GM12878 (cell line): ENCODE measurements at regions of chr4 and their contacts with region 1.

Region 1: GRCh38 chr4:100093091-100093866 is 97.0 kb downstream of the DDIT4L start:
- DNase-seq: peak; percentile 43
- ATAC-seq: peak; percentile 95
- H3K4me3 ChIP-seq: no peak overlapping the region
- H3K27ac ChIP-seq: no peak overlapping the region
- H3K4me1 ChIP-seq: no peaks in the 10 kb centered on the region
- H3K27me3 ChIP-seq: no peaks in the 10 kb centered on the region
- CTCF ChIP-seq: peak; percentile 78 to 87 (median 81)
- EP300 ChIP-seq: peak in 1 of 2 experiments; percentile 20; a peak in 2 of 4 replicates
- POLR2A ChIP-seq: no peak
- RAD21 ChIP-seq: peak; percentile 78

Region 2: GRCh38 chr4:99986792-99987191 is 106.5 kb before region 1 on chr4:
- CTCF ChIA-PET with region 1: interaction called, 11 read pairs
- POLR2A ChIA-PET with region 1: no interaction called
- RAD21 ChIA-PET with region 1: no interaction called
- SMC1A ChIA-PET with region 1: interaction called, 4 read pairs
- in situ Hi-C with region 1: no loop called
- intact Hi-C with region 1: no loop called
- DNase-seq: peak; percentile 3
- ATAC-seq: peak; percentile 87
- H3K4me3 ChIP-seq: no peak overlapping the region
- H3K27ac ChIP-seq: no peak overlapping the region
- H3K4me1 ChIP-seq: peaks cover 7% of the 10 kb centered on the region; the same call in 1 of the 2 replicates
- H3K27me3 ChIP-seq: no peaks in the 10 kb centered on the region
- CTCF ChIP-seq: no peak
- EP300 ChIP-seq: no peak
- POLR2A ChIP-seq: no peak
- RAD21 ChIP-seq: no peak

Region 3: DNA sequence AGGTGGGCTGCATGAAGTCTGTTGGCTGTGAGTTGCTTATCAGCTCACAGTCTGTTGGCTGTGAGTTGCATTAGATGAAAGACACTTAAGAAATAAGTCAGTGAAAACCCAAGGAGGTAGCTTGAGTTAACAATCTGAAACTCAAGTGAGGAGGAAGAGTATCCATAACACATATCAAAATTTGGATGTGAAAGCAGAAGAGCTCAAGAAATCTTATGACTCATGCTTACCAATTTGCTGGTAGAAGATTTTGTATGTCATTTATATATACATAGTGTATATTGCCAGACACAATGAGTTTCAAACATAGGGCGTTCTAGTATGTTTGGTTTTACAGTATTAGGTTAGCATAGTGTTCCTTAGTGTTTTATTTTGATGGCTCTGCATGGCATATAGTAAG is 10.4 kb before region 1 on chr4:
- CTCF ChIA-PET with region 1: interaction called, 120 read pairs
- POLR2A ChIA-PET with region 1: interaction called, 6 read pairs
- RAD21 ChIA-PET with region 1: interaction called, 30 read pairs
- SMC1A ChIA-PET with region 1: interaction called, 39 read pairs
- in situ Hi-C with region 1: no loop called
- intact Hi-C with region 1: no loop called
- DNase-seq: no peak
- ATAC-seq: peak; percentile 66
- H3K4me3 ChIP-seq: no peak overlapping the region
- H3K27ac ChIP-seq: no peak overlapping the region
- H3K4me1 ChIP-seq: no peaks in the 10 kb centered on the region
- H3K27me3 ChIP-seq: no peaks in the 10 kb centered on the region
- CTCF ChIP-seq: no peak
- EP300 ChIP-seq: no peak
- POLR2A ChIP-seq: no peak
- RAD21 ChIP-seq: no peak

Region 4: GRCh38 chr4:100113732-100114131 is 20.5 kb after region 1 on chr4:
- CTCF ChIA-PET with region 1: interaction called, 92 read pairs
- POLR2A ChIA-PET with region 1: no interaction called
- RAD21 ChIA-PET with region 1: interaction called, 5 read pairs
- SMC1A ChIA-PET with region 1: interaction called, 9 read pairs
- in situ Hi-C with region 1: no loop called
- intact Hi-C with region 1: no loop called
- DNase-seq: no peak
- ATAC-seq: no peak
- H3K4me3 ChIP-seq: no peak overlapping the region
- H3K27ac ChIP-seq: no peak overlapping the region
- H3K4me1 ChIP-seq: no peaks in the 10 kb centered on the region
- H3K27me3 ChIP-seq: no peaks in the 10 kb centered on the region
- CTCF ChIP-seq: no peak
- EP300 ChIP-seq: no peak
- POLR2A ChIP-seq: no peak
- RAD21 ChIP-seq: no peak

Region 5: GRCh38 chr4:100823066-100823992 is 730.0 kb after region 1 on chr4:
- CTCF ChIA-PET with region 1: interaction called, 5 read pairs
- POLR2A ChIA-PET with region 1: no interaction called
- RAD21 ChIA-PET with region 1: interaction called, 6 read pairs
- SMC1A ChIA-PET with region 1: no interaction called
- in situ Hi-C with region 1: no loop called
- intact Hi-C with region 1: loop called (anchors 5 kb)
- DNase-seq: peak; percentile 68
- ATAC-seq: peak; percentile 80
- H3K4me3 ChIP-seq: no peak overlapping the region
- H3K27ac ChIP-seq: peak overlapping the region; percentile 51
- H3K4me1 ChIP-seq: peaks cover 18% of the 10 kb centered on the region
- H3K27me3 ChIP-seq: no peaks in the 10 kb centered on the region
- CTCF ChIP-seq: no peak
- EP300 ChIP-seq: peak in 1 of 2 experiments; percentile 45; a peak in 2 of 4 replicates
- POLR2A ChIP-seq: no peak
- RAD21 ChIP-seq: no peak

Region 6: DNA sequence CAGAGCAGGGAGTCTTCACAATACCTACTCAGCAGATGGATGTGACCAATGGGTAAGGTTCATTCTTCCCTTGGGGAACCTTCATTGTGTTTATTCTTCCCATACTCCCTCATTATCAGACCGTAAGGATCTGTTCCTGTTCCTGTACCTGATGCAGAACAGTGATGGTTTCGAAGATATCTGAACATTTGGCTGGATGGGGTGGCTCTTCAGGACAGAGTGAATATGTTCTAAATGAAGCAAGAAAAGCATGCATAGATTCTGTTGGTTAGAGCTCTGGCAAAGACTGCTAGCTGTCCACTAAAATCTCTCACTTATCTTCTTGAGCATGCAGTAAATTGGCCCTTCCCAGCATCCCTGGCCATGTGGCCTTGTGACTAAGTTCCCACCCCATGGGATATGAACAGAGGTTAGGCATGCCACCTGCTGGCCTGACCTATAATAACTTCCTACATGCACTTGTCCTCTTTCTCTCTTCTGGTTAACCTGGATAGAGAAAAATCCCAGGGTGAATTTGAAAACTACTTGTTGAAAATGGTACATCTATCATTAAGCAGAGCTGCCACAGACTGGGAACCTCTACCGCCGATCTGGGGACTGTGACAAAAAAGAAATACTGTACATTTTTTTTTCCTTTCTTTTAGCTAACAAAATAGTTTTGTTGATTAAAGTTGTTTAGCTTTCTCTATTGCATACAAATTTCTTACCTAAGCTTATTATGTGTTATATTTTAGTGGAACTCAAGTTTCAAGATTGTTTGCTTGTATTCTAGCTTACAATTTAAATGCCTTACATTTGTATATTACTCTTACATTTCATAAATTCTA is 1637.2 kb after region 1 on chr4:
- CTCF ChIA-PET with region 1: interaction called, 24 read pairs
- POLR2A ChIA-PET with region 1: no interaction called
- RAD21 ChIA-PET with region 1: interaction called, 7 read pairs
- SMC1A ChIA-PET with region 1: interaction called, 14 read pairs
- in situ Hi-C with region 1: no loop called
- intact Hi-C with region 1: no loop called
- DNase-seq: peak; percentile 8
- ATAC-seq: peak; percentile 95
- H3K4me3 ChIP-seq: no peak overlapping the region
- H3K27ac ChIP-seq: no peak overlapping the region
- H3K4me1 ChIP-seq: no peaks in the 10 kb centered on the region
- H3K27me3 ChIP-seq: no peaks in the 10 kb centered on the region
- CTCF ChIP-seq: peak; percentile 55 to 72 (median 62); a peak in 5 of 6 replicates
- EP300 ChIP-seq: no peak
- POLR2A ChIP-seq: no peak
- RAD21 ChIP-seq: peak; percentile 84